ENCODE measurements at regions of chr15 and their contacts with region 1.

Region 1: DNA sequence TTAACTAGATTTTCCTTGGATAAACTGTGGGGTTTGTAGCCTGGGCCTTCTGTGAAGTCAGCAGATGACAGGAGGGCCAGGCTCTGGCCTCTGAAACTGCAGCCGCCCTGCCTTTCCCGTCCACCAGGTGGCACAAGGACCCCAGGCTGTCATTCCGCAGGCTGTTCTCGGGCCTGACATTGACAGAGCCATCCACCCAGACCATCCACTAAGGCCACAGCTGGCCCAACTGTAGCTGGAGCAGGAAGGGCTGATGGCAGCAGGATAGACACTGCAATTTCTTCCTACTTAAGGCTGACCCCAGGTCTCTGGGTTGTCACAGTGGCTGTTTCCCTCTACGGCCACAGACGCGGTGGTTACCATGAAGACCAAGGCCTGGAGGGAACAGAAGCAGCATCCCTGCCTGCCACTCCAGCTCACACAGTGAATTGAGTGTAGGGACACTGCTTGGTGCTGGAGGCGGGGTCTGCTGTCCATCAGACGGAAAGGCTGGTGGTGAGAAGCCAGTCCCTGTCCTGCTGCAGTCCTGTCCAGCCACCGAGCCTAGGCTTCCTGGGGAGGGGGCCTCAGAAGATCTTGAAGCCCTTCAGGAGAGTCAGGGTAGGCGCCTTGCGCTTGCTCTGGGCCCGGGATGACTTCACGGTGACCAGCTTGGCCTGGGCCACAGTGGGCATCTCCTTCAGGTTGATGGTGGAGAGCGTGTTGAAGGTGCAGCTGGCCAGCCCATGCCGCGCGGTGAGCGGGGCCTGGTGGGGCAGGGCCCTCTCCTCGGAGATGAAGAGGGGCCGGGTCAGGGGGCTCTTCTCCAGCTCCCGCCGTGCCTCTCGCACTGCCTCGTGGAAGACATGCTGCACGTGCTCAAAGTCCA is 9.4 kb downstream of the SLC51B start:
- DNase-seq: peak; percentile 88

Region 2: DNA sequence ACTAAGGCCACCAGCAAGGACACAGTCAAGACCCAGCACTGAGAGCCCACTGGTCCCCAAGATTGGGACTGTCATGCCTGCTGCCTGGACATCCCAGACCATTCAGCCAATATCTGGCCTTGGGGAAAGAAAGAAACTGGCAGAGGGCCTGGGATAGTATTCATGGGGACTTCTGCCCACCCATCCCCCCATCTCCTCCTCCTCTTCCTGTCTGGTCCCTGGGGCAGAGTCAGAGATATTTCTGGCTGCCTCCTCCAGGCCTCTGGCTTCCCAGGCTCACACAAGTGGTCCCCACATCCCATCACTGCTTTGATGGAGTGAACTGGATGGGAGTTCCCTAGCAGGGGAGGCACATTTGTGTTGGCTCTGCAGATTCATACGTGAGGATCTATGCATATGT is 17.5 kb after region 1 on chr15:
- intact Hi-C with region 1: loop called (anchors 2 kb)
- DNase-seq: no peak

Region 3: GRCh38 chr15:65083262-65083701 is 28.7 kb after region 1 on chr15:
- intact Hi-C with region 1: loop called (anchors 2 kb)
- DNase-seq: no peak

Region 4: DNA sequence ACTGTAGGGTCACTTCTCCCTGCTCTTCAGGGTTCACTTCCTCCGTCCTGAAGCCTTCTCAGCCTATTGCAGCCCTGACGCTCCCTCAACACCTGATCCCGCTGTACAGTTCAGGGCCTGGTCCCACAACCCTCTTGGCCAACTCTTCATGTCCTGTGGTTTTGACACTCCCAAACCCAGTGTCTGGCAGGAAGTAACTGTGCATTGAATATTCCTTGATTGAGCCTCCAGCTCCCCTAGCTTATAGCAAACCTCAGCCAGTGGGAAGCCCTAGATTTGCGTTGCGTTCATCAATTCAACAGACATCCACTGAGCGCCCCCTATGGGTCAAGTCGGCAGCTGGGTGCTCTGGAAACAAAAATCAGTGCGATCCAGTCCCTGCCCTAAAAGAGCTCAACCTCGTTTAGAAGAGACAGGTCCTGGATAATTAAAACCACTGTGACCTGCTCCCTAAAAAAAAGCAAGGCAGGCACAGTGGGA is 46.9 kb after region 1 on chr15:
- intact Hi-C with region 1: loop called (anchors 1 kb)
- DNase-seq: no peak